Caco-2 (cell line): ENCODE measurements at regions of chr17 and their contacts with region 1.

Region 1: GRCh38 chr17:50541716-50542688 is 5.0 kb upstream of the SPATA20 start:
- DNase-seq: peak; percentile 94 to 100
- H3K4me3 ChIP-seq: peak overlapping the region; percentile 45
- H3K4me3 Mint-ChIP-seq: peak overlapping the region; percentile 77
- H3K27ac Mint-ChIP-seq: peak overlapping the region; percentile 39
- H3K4me1 ChIP-seq: peaks cover 66% of the 10 kb centered on the region
- H3K4me1 Mint-ChIP-seq: peaks cover 69% of the 10 kb centered on the region
- H3K27me3 ChIP-seq: no peaks in the 10 kb centered on the region
- H3K27me3 Mint-ChIP-seq: no peaks in the 10 kb centered on the region
- CTCF ChIP-seq: peak; percentile 41 to 57

Region 2: DNA sequence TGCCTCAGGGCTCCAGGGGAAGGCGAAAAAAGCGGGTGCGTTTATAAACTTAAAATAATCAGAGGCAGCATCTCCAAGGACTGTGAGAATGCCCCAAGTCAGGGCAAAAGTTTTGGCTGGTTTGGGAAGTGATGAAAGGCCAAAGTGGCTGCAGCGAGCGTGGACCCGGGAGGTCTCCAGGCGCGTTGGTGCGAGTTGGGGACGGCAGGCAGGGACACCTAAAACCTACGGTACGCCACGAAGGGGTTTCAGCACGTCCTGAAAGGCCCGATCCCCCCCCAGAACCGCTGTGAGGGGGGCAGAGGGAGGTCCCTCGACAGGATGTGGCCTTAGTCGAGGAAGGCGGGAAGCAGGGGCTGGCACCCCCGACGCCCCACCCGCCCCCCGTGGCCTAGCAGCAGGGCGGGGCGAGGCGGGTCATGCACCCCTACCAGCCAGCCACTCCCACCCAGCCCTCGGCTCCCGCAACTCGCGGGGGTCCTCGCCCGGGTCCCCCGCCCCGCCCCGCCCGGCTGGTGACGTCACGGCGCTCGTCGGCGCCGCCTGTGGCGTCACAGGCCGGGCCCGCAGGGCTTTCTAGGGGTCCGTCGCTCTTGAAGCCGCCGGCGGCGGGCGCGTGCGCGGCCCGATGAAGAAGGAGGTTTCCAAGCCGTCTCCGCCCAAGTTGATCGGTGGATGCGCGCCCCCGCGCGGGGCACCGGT is 34.0 kb before region 1 on chr17 and contains the start of gene MYCBPAP:
- CTCF ChIA-PET with region 1: interaction called, 5 read pairs
- POLR2A ChIA-PET with region 1: interaction called, 3 read pairs
- intact Hi-C with region 1: loop called (anchors 2 kb)
- DNase-seq: peak; percentile 90 to 92
- H3K4me3 ChIP-seq: peak within 1 kb of the TSS; percentile 36
- H3K4me3 Mint-ChIP-seq: peak within 1 kb of the TSS; percentile 67
- H3K27ac Mint-ChIP-seq: peak within 1 kb of the TSS; percentile 58
- H3K4me1 ChIP-seq: peaks cover 16% of the 10 kb centered on the region
- H3K4me1 Mint-ChIP-seq: peaks cover 15% of the 10 kb centered on the region
- H3K27me3 ChIP-seq: no peaks in the 10 kb centered on the region
- H3K27me3 Mint-ChIP-seq: no peaks in the 10 kb centered on the region
- CTCF ChIP-seq: peak; percentile 35 to 53
- total RNA-seq, gene MYCBPAP: 1.3 and 2.7 TPM in 2 replicates

Region 3: DNA sequence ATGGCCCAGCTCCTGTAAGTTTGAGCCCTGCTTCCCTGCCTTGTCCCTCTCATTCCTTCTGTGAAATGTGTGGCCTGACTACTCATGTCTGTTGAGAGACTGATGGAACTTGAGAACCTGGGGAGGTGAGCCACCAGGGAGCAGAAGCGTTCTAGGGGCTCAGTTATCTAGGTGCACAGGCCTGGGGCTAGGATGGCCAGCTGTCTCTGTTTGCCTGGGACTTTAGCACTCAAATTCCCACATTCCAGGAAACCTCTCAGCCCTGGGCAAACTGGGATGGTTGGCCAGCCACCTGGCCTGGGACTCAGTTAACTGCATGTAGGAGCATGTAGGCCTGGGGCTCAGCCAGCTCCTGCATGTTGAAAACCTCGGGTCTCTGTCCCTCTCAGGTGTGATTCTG is 18.8 kb before region 1 on chr17:
- CTCF ChIA-PET with region 1: interaction called, 13 read pairs
- POLR2A ChIA-PET with region 1: interaction called, 6 read pairs
- intact Hi-C with region 1: loop called (anchors 1 kb)
- DNase-seq: peak; percentile 88 to 94
- H3K4me3 ChIP-seq: no peak overlapping the region
- H3K4me3 Mint-ChIP-seq: no peak overlapping the region
- H3K27ac Mint-ChIP-seq: peak overlapping the region; percentile 17
- H3K4me1 ChIP-seq: peaks cover 23% of the 10 kb centered on the region
- H3K4me1 Mint-ChIP-seq: peaks cover 26% of the 10 kb centered on the region
- H3K27me3 ChIP-seq: no peaks in the 10 kb centered on the region
- H3K27me3 Mint-ChIP-seq: no peaks in the 10 kb centered on the region
- CTCF ChIP-seq: peak in 1 of 2 experiments; percentile 60

Region 4: GRCh38 chr17:50560185-50560824 is 18.3 kb after region 1 on chr17 and contains the start of gene CACNA1G:
- CTCF ChIA-PET with region 1: interaction called, 21 read pairs
- POLR2A ChIA-PET with region 1: interaction called, 11 read pairs
- intact Hi-C with region 1: loop called (anchors 1 kb)
- DNase-seq: peak; percentile 97 to 100
- H3K4me3 ChIP-seq: peak within 1 kb of the TSS; percentile 41
- H3K4me3 Mint-ChIP-seq: peak within 1 kb of the TSS; percentile 87
- H3K27ac Mint-ChIP-seq: peak within 1 kb of the TSS; percentile 52
- H3K4me1 ChIP-seq: peaks cover 16% of the 10 kb centered on the region
- H3K4me1 Mint-ChIP-seq: peaks cover 7% of the 10 kb centered on the region
- H3K27me3 ChIP-seq: peaks cover 12% of the 10 kb centered on the region
- H3K27me3 Mint-ChIP-seq: peaks cover 16% of the 10 kb centered on the region
- CTCF ChIP-seq: no peak
- total RNA-seq, gene CACNA1G: 1.4 and 1.6 TPM in 2 replicates